Dorsolateral prefrontal cortex (tissue), 120 donors: ENCODE measurements at regions of chr10 and their contacts with region 1.

Region 1: DNA sequence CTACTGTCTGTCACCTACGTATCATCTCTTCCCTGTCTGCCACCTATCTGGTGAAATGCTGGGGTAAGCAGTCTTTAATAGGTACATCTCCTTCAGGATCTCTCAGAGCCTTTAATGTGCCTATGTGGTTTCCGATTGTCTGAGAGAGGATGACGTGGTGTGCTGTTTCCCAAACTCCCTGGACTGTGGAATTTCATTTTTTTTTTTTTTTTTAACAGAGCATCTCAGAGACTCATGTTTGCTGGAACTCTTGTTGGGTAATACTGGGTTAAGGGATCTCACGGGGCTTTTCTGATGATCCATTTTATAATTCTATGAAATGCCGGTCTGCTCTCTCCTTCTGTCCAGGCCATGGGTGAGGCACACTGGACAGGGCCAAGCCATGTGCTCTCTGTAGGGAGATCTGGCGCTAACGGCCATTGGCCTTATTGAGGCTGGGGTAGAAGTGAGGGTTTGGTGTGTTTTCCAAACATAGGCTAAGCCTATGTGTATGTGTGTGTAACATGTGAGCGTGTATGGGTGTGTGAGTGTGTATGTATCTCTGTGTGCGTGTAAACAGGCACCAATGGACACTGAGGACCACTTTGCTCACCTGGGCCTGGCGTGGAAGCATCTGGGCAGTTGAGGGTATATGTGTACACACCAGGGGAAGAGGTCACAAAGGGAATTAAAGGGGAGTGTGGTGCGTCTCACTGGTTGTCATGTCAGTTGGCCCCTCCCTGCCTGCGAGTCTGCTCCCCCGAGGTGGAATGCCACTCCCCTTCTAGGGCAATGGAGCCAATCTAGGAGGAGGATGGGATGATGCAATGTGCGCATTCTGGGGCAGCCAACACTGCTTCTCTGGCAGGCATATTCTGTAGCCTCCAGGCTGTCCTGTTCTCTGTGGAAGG is 7.8 kb downstream of the ADRA2A start:
- DNase-seq: no peak
- H3K4me3 ChIP-seq: no peak overlapping the region
- H3K27ac ChIP-seq: no peak overlapping the region
- H3K27me3 ChIP-seq: peaks cover 0 to 5% (median 0%) of the 10 kb centered on the region in 45 donors
- CTCF ChIP-seq: no peak

Region 2: DNA sequence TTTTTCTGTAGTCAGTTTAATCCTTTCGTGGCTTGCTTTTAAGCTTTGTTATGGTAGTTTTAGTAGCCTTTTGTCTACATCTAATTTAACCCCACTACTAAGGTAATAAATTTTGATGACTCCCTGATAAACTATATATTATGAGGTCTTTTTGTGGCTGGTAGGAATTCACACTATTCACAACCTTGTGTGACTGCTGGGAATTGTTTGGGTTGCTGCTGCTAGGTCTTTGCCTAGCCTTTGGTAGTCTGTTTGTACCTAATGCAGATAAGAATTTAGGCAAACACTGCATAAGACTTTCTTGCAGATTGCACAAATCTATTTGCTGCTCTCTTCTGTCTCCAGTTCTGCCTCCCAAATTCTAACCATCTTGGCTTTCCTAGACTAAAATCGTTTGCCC is 106.9 kb before region 1 on chr10:
- intact Hi-C with region 1: no loop called
- DNase-seq: no peak
- H3K4me3 ChIP-seq: no peak overlapping the region
- H3K27ac ChIP-seq: no peak overlapping the region
- H3K27me3 ChIP-seq: no peaks in the 10 kb centered on the region
- CTCF ChIP-seq: no peak

Region 3: DNA sequence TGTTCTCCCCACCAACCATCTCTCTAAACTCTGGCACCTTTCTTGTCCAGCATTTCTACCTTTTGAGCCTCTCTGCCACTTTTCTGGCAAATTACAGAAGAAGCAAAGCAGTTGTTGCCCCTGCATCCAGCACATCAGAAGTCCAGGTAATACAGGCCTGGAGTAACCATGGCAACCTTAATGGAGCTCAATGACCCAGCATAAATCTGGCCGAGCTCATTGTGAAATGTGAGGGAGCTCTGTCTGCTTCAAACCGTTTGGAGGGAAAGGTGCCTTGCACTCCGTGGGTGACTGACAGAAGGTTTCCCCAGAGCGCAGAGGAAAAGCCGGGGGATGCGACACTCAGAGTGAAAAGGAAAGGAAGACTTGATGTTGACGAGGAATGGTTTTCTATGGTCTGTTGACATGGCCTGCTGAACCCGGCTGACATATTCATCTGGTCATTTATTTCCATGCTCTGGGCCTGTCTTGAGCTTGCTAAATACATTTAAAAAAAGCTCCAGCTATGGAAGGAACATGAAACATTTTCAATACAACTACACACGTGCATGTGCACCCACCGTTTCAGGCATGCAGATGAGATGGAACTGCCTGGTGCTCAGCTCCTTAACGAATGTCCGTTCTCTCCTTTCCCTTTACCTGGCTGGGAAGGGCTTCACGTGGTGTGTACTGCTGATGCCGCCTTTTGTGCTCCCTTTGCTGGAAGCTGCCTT is 67.1 kb after region 1 on chr10:
- intact Hi-C with region 1: no loop called
- DNase-seq: no peak
- H3K4me3 ChIP-seq: no peak overlapping the region
- H3K27ac ChIP-seq: no peak overlapping the region
- H3K27me3 ChIP-seq: peaks cover 0 to 9% (median 0%) of the 10 kb centered on the region in 45 donors
- CTCF ChIP-seq: no peak

Region 4: DNA sequence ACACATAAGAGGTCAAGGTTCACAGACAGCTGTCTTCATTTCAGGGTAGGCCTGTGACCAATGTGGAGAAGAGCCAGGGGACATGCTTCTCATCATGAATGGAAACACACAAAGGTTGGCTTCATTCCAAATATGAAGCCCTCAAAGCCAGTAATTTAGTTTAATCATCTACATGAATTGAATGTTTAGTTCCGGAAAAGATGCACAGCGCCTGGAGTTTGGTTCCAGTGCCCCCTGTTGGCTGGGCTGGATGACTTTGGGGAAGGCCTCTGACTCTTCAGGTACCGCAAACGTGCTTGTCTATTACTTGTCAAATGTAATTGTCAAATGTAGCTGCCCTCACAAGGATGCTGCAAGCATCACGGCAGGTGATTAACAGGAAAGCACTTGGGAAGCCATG is 122.9 kb after region 1 on chr10:
- intact Hi-C with region 1: loop called in 1 of 2 experiments (anchors 5 kb)
- DNase-seq: no peak
- H3K4me3 ChIP-seq: no peak overlapping the region
- H3K27ac ChIP-seq: no peak overlapping the region
- H3K27me3 ChIP-seq: peaks cover 0 to 13% (median 0%) of the 10 kb centered on the region in 45 donors
- CTCF ChIP-seq: peak in 7 of 56 donors; percentile 10 to 22 (median 14)